ENCODE measurements at regions of chr1 and their contacts with region 1.

Region 1: DNA sequence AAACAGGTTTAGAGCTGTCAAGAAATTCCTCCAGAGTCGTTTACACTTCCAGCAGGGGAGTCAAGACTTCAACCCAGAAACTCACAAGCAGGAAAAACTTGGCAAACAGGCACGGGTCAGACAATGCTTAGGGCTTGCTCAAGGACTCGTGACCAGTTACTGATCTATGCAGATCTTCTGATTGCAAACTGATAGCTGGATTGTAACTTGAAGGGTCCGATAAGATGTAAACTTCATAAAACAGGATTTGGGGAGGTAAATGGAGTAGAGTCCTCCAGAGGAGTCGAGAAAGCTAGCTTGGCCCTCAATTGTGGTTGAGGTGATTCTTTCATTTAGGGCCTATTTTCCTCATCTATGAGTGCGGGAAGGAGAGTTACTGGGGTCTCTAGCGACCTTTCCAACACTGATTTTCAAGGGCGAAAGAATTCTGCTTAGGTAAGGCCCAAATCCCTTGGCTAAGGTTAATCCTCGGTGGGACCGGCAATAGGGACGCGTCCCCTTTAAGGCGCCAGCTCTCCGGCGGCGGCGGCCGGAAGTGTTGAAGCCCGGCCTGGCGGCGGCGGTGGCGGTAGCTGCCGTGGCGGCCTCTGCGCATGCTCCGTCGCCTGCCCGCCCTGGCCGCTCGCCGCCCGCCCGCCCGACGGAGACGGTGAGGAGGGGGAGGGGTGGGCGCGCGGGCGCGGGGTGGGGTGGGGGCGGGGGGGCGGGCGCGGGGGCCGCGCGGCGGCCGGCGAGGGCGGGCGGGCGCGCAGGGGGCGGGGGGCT is at the start of gene GMEB1:
- DNase-seq: peak; percentile 81
- H3K4me3 ChIP-seq: peak within 1 kb of the TSS; percentile 60 to 87
- H3K27ac ChIP-seq: peak within 1 kb of the TSS; percentile 95 to 98
- H3K4me1 ChIP-seq: no peaks in the 10 kb centered on the region
- H3K27me3 ChIP-seq: no peaks in the 10 kb centered on the region
- CTCF ChIP-seq: peak in 2 of 4 experiments; percentile 14 to 20
- POLR2A ChIP-seq: no peak
- total RNA-seq, gene GMEB1: 2.4 to 37.4 (median 15.2) TPM

Region 2: GRCh38 chr1:28458237-28459228 is 209.8 kb before region 1 on chr1:
- intact Hi-C with region 1: no loop called
- DNase-seq: no peak
- H3K4me3 ChIP-seq: no peak overlapping the region
- H3K27ac ChIP-seq: peak overlapping the region in 1 of 2 donors; percentile 68
- H3K4me1 ChIP-seq: no peaks in the 10 kb centered on the region
- H3K27me3 ChIP-seq: no peaks in the 10 kb centered on the region
- CTCF ChIP-seq: no peak
- POLR2A ChIP-seq: no peak

Region 3: DNA sequence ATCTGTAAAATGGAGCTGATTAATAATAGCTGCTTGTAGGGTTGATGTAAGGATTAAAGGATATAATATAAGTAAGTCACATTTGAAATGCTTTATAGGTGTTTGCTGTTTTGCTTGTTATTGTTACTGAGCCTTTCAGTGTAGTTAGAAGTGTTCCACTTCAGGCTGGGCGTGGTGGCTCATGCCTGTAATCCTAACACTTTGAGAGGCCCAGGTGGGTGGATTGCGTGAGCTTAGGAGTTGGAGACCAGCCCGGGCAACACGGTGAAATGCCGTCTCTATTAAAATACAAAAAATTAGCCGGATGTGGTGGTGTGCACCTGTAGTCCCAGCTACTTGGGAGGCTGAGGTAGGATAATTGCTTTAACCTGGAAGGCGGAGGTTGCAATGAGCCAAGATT is 103.3 kb before region 1 on chr1:
- intact Hi-C with region 1: no loop called
- DNase-seq: no peak
- H3K4me3 ChIP-seq: no peak overlapping the region
- H3K27ac ChIP-seq: no peak overlapping the region
- H3K4me1 ChIP-seq: no peaks in the 10 kb centered on the region
- H3K27me3 ChIP-seq: no peaks in the 10 kb centered on the region
- CTCF ChIP-seq: no peak
- POLR2A ChIP-seq: no peak

Region 4: DNA sequence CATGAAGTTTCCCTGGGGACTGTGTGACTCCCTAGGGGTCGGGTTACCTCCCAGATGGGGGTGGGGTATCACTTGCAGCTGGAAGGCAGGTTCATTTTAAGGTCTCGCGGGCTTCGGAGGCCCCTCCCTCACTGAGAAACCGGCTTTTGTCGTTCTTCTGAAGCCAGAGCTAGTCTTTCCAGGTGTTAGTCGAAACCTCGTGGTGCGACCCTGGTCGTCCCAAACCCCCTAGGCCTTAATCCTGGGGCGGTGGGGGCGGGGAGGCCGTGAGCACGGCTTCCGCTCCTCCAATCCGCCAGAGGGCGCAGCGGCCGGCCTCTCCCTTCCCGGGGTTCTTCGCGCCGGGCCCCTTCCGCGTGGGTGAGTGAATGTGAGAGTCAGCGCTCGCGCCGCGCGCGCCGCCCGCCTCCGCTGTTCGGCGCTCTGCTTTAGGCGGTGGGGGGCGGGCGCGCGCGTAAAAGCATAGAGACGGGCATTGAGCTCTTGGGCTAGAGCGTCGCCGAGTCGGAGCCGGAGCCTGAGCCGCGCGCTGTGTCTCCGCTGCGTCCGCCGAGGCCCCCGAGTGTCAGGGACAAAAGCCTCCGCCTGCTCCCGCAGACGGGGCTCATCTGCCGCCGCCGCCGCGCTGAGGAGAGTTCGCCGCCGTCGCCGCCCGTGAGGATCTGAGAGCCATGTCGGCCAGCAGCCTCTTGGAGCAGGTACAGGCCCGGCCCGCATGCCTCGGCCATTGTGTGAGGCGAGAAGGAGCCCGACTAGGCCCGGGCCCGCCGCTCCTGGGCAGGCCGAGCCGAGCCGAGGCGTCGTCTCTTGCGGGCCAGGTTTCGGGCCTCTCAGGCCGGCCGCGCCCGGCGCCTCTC is 68.3 kb after region 1 on chr1 and contains the start of gene YTHDF2:
- intact Hi-C with region 1: loop called (anchors 10 kb)
- DNase-seq: peak; percentile 96 to 97
- H3K4me3 ChIP-seq: peak within 1 kb of the TSS; percentile 65 to 68
- H3K27ac ChIP-seq: peak within 1 kb of the TSS; percentile 88 to 93
- H3K4me1 ChIP-seq: peaks cover 9 to 13% of the 10 kb centered on the region in 2 donors
- H3K27me3 ChIP-seq: no peaks in the 10 kb centered on the region
- CTCF ChIP-seq: peak; percentile 94 to 96 (median 96)
- POLR2A ChIP-seq: peak; percentile 64 to 88
- total RNA-seq, gene YTHDF2: 24.4 to 83.7 (median 58.6) TPM

Region 5: GRCh38 chr1:28811766-28812668 is 143.6 kb after region 1 on chr1 and contains the start of gene OPRD1:
- intact Hi-C with region 1: no loop called
- DNase-seq: no peak
- H3K4me3 ChIP-seq: no peak within 1 kb of the TSS
- H3K27ac ChIP-seq: no peak within 1 kb of the TSS
- H3K4me1 ChIP-seq: peaks cover 0 to 4% of the 10 kb centered on the region in 2 donors
- H3K27me3 ChIP-seq: peaks cover 0 to 5% of the 10 kb centered on the region in 2 donors
- CTCF ChIP-seq: no peak
- POLR2A ChIP-seq: no peak
- total RNA-seq, gene OPRD1: 0.07 TPM in 1 of 4 donors, not detected in the others

Measured in uterus (tissue), 4 donors.